Breast epithelium (tissue), 4 donors: ENCODE measurements at regions of chr11 and their contacts with region 1.

Region 1: DNA sequence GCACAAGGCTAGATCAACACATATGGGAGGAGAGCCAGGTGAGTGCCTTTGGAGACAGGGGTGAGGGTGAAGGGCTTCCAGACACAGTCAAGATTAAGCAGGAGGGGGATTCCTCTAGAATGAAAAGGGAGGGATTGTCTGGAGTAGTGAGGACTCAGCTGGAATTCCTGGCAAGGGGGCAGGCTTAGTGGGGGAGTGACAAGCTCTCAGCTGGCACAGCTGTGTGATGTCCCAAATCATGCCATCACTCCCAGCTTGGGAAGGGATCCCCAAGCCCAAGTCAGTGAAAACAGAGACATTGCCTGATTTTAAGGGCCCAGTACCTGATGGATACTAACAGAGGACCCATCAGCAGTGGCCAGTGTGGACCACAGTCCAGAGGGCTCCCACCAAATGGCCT is 119.0 kb downstream of the MPPED2 start:
- DNase-seq: no peak
- H3K4me3 ChIP-seq: no peak overlapping the region
- H3K27ac ChIP-seq: no peak overlapping the region
- H3K4me1 ChIP-seq: no peaks in the 10 kb centered on the region
- H3K27me3 ChIP-seq: no peaks in the 10 kb centered on the region
- CTCF ChIP-seq: no peak
- POLR2A ChIP-seq: no peak

Region 2: GRCh38 chr11:30533445-30533947 is 66.3 kb after region 1 on chr11:
- intact Hi-C with region 1: loop called (anchors 2 kb)
- DNase-seq: no peak
- H3K4me3 ChIP-seq: no peak overlapping the region
- H3K27ac ChIP-seq: no peak overlapping the region
- H3K4me1 ChIP-seq: no peaks in the 10 kb centered on the region
- H3K27me3 ChIP-seq: no peaks in the 10 kb centered on the region
- CTCF ChIP-seq: no peak
- POLR2A ChIP-seq: no peak

Region 3: DNA sequence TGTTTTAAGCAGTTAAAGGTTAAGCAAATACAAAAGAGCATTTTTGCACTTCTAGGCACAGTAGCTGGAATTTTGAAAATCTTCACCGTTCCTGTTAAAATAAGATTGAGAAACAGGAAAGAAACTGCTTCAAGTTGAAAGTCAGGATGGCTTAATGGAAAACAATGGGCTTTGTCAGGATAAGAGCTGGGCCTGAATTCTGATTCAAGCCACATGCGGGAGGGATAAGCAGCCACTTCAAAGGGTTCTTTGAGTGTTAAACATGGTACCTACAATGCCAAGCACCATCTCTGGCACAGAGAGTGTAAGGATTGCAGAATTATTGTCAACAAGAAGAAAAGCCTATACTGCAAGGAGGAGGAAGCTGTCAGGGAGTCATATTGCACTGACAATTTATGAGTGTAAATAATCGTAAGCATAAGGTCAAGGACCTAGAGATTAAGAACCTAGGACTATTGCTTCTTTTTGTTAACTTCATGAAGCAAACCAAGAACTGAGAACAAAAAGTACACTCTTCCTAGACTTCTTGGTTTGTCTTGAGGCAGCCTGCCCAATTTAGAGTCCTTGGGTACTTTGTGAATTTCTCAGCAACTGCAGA is 86.4 kb after region 1 on chr11:
- intact Hi-C with region 1: no loop called
- DNase-seq: no peak
- H3K4me3 ChIP-seq: no peak overlapping the region
- H3K27ac ChIP-seq: no peak overlapping the region
- H3K4me1 ChIP-seq: no peaks in the 10 kb centered on the region
- H3K27me3 ChIP-seq: no peaks in the 10 kb centered on the region
- CTCF ChIP-seq: no peak
- POLR2A ChIP-seq: no peak